ENCODE measurements at regions of chr1 and their contacts with region 1.

Region 1: DNA sequence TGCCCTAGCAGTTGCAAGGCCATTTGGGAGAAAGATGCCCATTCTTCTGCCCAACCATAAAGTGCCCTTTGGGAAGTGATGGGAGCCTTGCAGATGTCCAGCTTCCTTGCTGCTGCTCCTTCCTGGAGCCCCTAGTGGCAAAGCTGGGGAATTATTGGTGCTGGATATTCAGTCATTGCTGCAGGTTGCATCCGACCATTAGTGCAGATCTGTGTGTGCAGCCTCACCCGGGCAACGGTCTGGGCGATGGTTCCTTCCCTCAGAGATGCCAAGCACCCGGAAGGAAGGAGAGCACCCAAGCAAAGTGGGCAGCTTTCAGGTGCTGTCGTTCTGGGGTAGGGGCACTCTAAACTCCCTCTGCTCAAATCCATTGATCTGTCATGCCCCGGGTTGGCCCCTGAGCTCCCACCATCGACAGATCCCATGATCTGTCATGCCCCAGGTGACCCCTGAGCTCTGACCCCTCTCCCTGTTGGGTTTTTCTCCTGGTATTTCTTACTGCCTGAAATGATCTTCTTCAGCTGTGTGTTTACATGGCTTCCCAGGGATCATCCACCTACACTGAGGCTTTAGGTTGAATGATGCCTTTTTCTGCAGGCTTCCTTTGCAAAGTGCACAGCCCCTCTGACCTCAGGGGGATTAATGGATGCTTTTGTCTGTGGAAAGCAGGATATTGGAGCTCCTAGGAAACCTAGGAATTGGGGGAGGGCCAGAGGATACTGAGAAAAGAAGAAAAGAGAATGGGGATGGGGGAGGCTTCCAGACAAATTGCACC is 467.5 kb downstream of the PTPRU start:
- DNase-seq: no peak
- H3K4me3 Mint-ChIP-seq: no peak overlapping the region
- H3K27ac Mint-ChIP-seq: no peak overlapping the region
- H3K4me1 Mint-ChIP-seq: peaks cover 11% of the 10 kb centered on the region
- H3K27me3 Mint-ChIP-seq: peaks cover 36% of the 10 kb centered on the region

Region 2: DNA sequence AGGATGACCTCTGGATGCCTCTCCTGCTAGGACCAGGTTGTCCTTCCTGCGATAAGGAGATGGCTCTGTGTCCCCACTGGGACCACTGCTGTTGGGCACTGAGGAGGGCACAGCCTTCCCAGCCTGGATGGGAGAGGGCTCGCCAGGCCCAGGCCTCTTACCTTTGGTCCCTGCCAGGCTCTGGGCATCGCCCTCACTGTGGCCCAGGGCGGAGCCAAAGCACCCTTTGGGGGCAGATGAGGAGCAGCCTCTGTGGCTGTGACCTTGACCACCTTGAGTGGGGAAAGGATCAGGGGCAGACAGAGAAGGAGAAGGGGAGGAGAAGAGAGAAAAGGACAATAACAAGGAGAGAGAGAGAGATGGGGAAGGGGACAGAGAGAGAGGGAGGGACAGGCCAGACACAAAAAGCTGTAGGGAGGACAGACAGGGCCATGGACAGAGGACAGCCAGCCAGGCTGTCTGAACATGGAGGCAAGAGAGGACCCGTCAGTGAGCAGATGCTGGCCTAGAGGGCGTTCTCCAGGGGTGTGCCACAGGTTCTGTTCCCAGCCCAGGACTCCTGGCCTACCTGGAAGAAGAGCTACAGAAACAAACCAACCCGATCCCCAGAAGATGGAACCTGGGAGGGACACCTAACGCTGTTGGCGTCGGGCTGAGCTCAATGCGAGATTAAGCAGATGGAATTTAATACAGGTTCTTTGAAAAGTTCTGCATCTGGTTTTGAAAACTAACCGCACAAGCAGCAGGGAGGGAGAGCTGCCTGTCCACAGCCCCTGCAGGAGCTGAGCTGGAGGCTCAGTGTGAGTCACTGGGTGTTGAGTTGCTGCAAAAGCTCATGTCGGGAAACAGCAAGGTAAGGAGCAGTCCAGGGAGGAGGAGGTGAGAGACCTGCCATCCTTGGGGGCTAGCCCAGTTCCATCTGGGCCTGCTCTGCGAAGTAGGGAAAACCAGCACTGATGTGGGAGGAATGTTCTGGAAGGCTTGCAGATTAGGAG is 205.4 kb before region 1 on chr1:
- CTCF ChIA-PET with region 1: no interaction called
- POLR2A ChIA-PET with region 1: no interaction called
- DNase-seq: no peak
- H3K4me3 Mint-ChIP-seq: no peak overlapping the region
- H3K27ac Mint-ChIP-seq: no peak overlapping the region
- H3K4me1 Mint-ChIP-seq: no peaks in the 10 kb centered on the region
- H3K27me3 Mint-ChIP-seq: peaks cover 2% of the 10 kb centered on the region

Region 3: GRCh38 chr1:29686012-29686930 is 17.5 kb before region 1 on chr1:
- CTCF ChIA-PET with region 1: interaction called, 10 read pairs
- POLR2A ChIA-PET with region 1: no interaction called
- DNase-seq: peak; percentile 3
- H3K4me3 Mint-ChIP-seq: no peak overlapping the region
- H3K27ac Mint-ChIP-seq: no peak overlapping the region
- H3K4me1 Mint-ChIP-seq: peaks cover 20% of the 10 kb centered on the region
- H3K27me3 Mint-ChIP-seq: peaks cover 6% of the 10 kb centered on the region